ENCODE measurements at regions of chr5 and their contacts with region 1.

Region 1: GRCh38 chr5:13179407-13180087 is 764.9 kb downstream of the DNAH5 start:
- DNase-seq: no peak
- ATAC-seq: no peak

Region 2: GRCh38 chr5:13624283-13625074 is 444.9 kb after region 1 on chr5:
- intact Hi-C with region 1: loop called (anchors 5 kb)
- DNase-seq: no peak
- ATAC-seq: no peak

Region 3: GRCh38 chr5:14081791-14082190 is 902.2 kb after region 1 on chr5:
- intact Hi-C with region 1: no loop called
- DNase-seq: no peak
- ATAC-seq: no peak

Measured in sciatic nerve (tissue), 2 donors.